SK-N-SH (cell line): ENCODE measurements at regions of chr3 and their contacts with region 1.

Region 1: GRCh38 chr3:183815563-183815940 is 9.8 kb downstream of the MAP6D1 start:
- DNase-seq: no peak
- H3K4me3 ChIP-seq: no peak overlapping the region
- H3K27ac ChIP-seq: no peak overlapping the region
- H3K4me1 ChIP-seq: no peaks in the 10 kb centered on the region
- H3K27me3 ChIP-seq: no peaks in the 10 kb centered on the region
- CTCF ChIP-seq: no peak
- EP300 ChIP-seq: no peak
- RAD21 ChIP-seq: no peak

Region 2: DNA sequence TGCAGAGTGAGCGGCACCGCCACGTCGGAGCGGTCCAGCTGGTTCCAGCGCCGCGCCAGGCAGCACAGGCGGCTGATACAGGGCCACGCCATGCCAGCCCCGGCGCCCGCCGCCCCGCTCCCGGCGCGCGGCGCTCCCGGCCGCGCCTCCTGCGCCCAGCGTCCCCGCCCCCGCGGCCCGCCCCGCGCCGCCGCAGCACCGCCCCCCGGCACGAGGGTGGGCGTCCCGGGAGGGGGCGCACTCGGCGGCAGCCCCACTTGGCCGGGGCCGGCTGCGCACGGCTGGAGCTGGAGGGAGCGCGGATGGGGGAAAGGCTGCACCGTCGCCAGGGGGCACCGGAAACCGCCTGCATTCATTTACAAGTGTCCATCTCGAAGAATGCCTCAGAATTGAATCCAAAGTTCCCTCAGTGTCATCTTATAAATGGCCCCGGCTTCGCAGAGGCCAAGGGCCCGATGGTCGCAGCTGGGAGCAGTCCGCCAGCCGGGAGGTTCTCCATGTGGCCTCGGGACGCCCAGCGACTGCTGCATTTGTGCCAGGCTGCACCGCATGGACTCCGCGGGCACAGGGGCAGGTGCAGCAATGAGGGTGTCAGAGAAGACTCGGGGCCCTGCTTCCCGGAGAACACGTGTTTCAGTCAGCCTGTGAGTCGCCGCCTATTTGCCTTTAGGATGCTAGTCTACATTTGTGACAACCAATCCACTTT is 10.1 kb after region 1 on chr3 and contains the start of gene MAP6D1:
- CTCF ChIA-PET with region 1: interaction called, 14 read pairs
- POLR2A ChIA-PET with region 1: interaction called, 3 read pairs
- DNase-seq: peak; percentile 96
- H3K4me3 ChIP-seq: peak within 1 kb of the TSS; percentile 61
- H3K27ac ChIP-seq: 0 out of 4 replicates have a peak within 1 kb of the TSS, but pooled peaks of 1 of the 2 experiments have one; percentile 30
- H3K4me1 ChIP-seq: peaks cover 0 to 26% of the 10 kb centered on the region in 2 experiments; a peak in 2 of 4 replicates
- H3K27me3 ChIP-seq: no peaks in the 10 kb centered on the region
- CTCF ChIP-seq: peak; percentile 46
- EP300 ChIP-seq: no peak
- RAD21 ChIP-seq: peak; percentile 32
- polyA plus RNA-seq, gene MAP6D1: 2.6 and 3.4 TPM in 2 replicates